ENCODE measurements at regions of chr9 and their contacts with region 1.

Region 1: GRCh38 chr9:69190086-69190862 is 16.2 kb downstream of the TJP2 start:
- DNase-seq: no peak
- ATAC-seq: no peak
- H3K4me3 ChIP-seq: no peak overlapping the region
- H3K4me3 Mint-ChIP-seq: no peak overlapping the region
- H3K27ac ChIP-seq: no peak overlapping the region
- H3K27ac Mint-ChIP-seq: no peak overlapping the region
- H3K4me1 ChIP-seq: peaks cover 3% of the 10 kb centered on the region
- H3K4me1 Mint-ChIP-seq: no peaks in the 10 kb centered on the region
- H3K27me3 ChIP-seq: no peaks in the 10 kb centered on the region
- H3K27me3 Mint-ChIP-seq: no peaks in the 10 kb centered on the region
- CTCF ChIP-seq: no peak

Region 2: DNA sequence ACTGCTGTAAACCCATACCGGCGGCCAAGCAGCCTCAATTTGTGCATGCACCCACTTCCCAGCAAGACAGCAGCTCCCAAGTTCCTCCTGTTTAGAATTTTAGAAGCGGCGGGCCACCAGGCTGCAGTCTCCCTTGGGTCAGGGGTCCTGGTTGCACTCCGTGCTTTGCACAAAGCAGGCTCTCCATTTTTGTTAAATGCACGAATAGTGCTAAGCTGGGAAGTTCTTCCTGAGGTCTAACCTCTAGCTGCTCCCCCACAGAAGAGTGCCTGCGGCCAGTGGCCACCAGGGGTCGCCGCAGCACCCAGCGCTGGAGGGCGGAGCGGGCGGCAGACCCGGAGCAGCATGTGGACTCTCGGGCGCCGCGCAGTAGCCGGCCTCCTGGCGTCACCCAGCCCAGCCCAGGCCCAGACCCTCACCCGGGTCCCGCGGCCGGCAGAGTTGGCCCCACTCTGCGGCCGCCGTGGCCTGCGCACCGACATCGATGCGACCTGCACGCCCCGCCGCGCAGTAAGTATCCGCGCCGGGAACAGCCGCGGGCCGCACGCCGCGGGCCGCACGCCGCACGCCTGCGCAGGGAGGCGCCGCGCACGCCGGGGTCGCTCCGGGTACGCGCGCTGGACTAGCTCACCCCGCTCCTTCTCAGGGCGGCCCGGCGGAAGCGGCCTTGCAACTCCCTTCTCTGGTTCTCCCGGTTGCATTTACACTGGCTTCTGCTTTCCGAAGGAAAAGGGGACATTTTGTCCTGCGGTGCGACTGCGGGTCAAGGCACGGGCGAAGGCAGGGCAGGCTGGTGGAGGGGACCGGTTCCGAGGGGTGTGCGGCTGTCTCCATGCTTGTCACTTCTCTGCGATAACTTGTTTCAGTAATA is 154.6 kb before region 1 on chr9 and contains the start of gene FXN:
- intact Hi-C with region 1: loop called (anchors 5 kb)
- DNase-seq: peak; percentile 79 to 88
- ATAC-seq: peak; percentile 89 to 95 (median 89)
- H3K4me3 ChIP-seq: peak within 1 kb of the TSS; percentile 78
- H3K4me3 Mint-ChIP-seq: peak within 1 kb of the TSS; percentile 98
- H3K27ac ChIP-seq: peak within 1 kb of the TSS; percentile 34
- H3K27ac Mint-ChIP-seq: peak within 1 kb of the TSS; percentile 92 to 93
- H3K4me1 ChIP-seq: peaks cover 14% of the 10 kb centered on the region
- H3K4me1 Mint-ChIP-seq: peaks cover 10 to 15% of the 10 kb centered on the region in 2 donors
- H3K27me3 ChIP-seq: no peaks in the 10 kb centered on the region
- H3K27me3 Mint-ChIP-seq: no peaks in the 10 kb centered on the region
- CTCF ChIP-seq: peak; percentile 90
- total RNA-seq, gene FXN: 11.5 to 19.4 (median 18.9) TPM

Region 3: DNA sequence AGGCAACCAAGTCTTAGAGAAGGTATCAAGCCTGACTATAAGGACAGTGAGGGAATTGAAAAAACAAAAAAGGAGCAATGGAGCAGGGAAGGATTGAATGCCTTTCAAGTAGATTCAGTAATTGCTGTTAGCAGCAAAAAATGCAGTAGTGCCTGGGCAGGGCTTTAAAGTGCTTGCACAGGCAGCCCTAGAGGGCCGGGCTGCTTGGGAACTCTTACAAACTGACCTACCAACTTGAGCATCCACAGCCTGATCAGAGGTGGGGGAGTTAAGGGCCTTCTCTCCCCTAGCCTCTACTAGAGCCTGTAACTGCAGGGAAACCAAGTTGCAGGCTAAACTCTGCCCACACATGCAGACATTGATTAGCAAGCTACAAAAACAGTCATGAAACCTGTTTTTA is 135.3 kb before region 1 on chr9:
- intact Hi-C with region 1: loop called (anchors 1 kb)
- DNase-seq: no peak
- ATAC-seq: no peak
- H3K4me3 ChIP-seq: no peak overlapping the region
- H3K4me3 Mint-ChIP-seq: no peak overlapping the region
- H3K27ac ChIP-seq: no peak overlapping the region
- H3K27ac Mint-ChIP-seq: no peak overlapping the region
- H3K4me1 ChIP-seq: no peaks in the 10 kb centered on the region
- H3K4me1 Mint-ChIP-seq: peaks cover 12 to 18% of the 10 kb centered on the region in 2 donors
- H3K27me3 ChIP-seq: no peaks in the 10 kb centered on the region
- H3K27me3 Mint-ChIP-seq: no peaks in the 10 kb centered on the region
- CTCF ChIP-seq: no peak

Region 4: GRCh38 chr9:69155341-69156030 is 34.8 kb before region 1 on chr9:
- intact Hi-C with region 1: loop called (anchors 2 kb)
- DNase-seq: no peak
- ATAC-seq: peak in 1 of 3 donors; percentile 32
- H3K4me3 ChIP-seq: no peak overlapping the region
- H3K4me3 Mint-ChIP-seq: no peak overlapping the region
- H3K27ac ChIP-seq: no peak overlapping the region
- H3K27ac Mint-ChIP-seq: no peak overlapping the region
- H3K4me1 ChIP-seq: no peaks in the 10 kb centered on the region
- H3K4me1 Mint-ChIP-seq: no peaks in the 10 kb centered on the region
- H3K27me3 ChIP-seq: no peaks in the 10 kb centered on the region
- H3K27me3 Mint-ChIP-seq: no peaks in the 10 kb centered on the region
- CTCF ChIP-seq: no peak